ENCODE measurements at regions of chr17 and their contacts with region 1.

Region 1: DNA sequence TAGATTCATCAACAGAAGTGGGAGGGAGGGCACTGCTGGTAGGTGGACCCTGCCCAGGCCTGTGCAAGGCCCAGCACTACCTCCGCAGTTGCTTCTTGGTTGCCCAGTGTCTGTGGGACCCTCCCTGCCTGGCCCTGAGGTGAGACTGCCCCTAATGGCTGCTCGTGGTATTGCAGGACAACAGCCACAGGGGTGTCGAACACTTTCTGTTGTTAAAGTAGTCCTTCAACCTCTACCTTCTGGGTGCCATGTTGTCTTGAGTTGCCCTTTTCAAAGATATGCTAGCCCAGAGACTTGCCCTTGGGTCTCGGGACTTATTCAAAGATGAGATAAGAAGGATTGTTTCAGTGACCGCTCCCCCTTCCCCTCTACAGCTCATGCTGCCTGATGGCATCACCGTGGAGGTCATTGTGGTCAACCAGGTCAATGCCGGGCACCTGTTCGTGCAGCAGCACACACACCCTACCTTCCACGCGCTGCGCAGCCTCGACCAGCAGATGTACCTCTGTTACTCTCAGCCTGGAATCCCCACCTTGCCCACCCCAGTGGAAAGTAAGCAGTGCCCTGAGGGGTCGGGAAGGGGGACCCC is 29.1 kb downstream of the AKAP1 start:
- DNase-seq: peak in 6 of 10 donors; percentile 34 to 63 (median 48)
- H3K4me3 ChIP-seq: no peak overlapping the region
- H3K27ac ChIP-seq: peak overlapping the region in 1 of 59 donors; percentile 18
- H3K27me3 ChIP-seq: no peaks in the 10 kb centered on the region
- CTCF ChIP-seq: peak; percentile 63 to 88 (median 77)

Region 2: GRCh38 chr17:56908001-56908542 is 206.1 kb before region 1 on chr17:
- intact Hi-C with region 1: no loop called
- DNase-seq: peak in 3 of 10 donors; percentile 14 to 48 (median 39)
- H3K4me3 ChIP-seq: no peak overlapping the region
- H3K27ac ChIP-seq: peak overlapping the region in 1 of 59 donors; percentile 28
- H3K27me3 ChIP-seq: no peaks in the 10 kb centered on the region
- CTCF ChIP-seq: no peak

Region 3: GRCh38 chr17:57995076-57995956 is 881.1 kb after region 1 on chr17:
- intact Hi-C with region 1: loop called in 1 of 2 experiments (anchors 10 kb)
- DNase-seq: peak in 9 of 10 donors; percentile 9 to 77 (median 61)
- H3K4me3 ChIP-seq: peak overlapping the region in 1 of 59 donors; percentile 21
- H3K27ac ChIP-seq: peak overlapping the region in 57 of 59 donors; percentile 11 to 92 (median 75)
- H3K27me3 ChIP-seq: no peaks in the 10 kb centered on the region
- CTCF ChIP-seq: peak; percentile 37 to 87 (median 72)